Panc1 (cell line): ENCODE measurements at regions of chr9 and their contacts with region 1.

Region 1: DNA sequence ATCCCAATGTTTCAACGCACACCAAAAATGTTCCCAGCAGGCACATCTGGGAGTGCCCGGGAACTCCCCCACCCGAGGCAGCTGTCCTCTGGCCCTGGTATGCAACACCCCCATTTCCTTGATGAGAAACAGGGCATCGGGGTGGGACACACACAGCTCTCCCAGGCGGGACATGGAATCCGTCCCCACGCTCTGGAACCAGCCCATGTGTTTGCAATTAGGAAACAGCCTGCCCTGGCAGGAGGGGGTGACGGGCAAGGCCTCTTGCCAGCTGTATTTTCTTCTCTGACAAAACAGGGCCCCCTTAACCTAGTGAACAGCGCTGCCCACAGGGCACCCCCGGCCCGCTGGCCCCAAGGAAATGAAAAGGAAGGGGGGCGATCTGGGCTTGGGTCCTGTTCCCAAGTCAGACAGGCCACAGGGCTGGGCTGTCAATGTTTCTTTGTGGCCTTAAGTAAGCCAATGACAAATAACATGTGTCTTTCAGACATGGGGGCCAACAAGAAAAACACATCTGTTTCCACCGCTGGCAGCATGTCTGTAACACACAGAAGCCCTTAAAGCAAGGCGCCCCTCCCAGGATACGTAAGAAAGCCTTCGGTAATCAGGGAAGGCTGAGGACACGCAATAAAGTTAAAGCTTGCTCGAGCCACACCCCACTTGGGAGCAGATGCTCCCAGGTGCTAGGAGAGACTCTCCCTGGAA is 125.3 kb downstream of the ROR2 start:
- DNase-seq: no peak
- ATAC-seq: no peak
- H3K4me3 ChIP-seq: no peak overlapping the region
- H3K27ac ChIP-seq: no peak overlapping the region
- H3K4me1 ChIP-seq: no peaks in the 10 kb centered on the region
- H3K27me3 ChIP-seq: no peaks in the 10 kb centered on the region
- CTCF ChIP-seq: no peak

Region 2: DNA sequence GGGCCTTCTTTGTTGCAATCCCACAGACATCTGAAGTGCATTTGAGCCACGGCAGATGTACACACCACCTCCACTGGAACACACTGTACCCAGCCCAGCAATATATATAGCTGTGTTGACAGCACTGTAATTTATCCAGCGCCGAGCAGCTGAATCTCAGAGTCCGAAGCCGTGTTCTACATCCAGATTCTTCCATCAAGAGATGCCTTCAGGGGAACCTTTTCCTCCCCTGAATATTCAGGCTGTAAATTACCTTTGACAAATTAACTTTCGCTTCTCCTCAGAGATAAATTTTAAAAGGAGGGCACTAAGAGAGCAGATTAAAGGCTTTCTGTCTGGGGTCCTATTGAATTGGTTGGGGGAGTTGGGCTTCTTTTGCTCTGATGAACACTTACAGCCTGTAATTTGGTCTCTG is 48.9 kb after region 1 on chr9:
- CTCF ChIA-PET with region 1: no interaction called
- POLR2A ChIA-PET with region 1: no interaction called
- in situ Hi-C with region 1: no loop called
- intact Hi-C with region 1: no loop called
- DNase-seq: no peak
- ATAC-seq: no peak
- H3K4me3 ChIP-seq: no peak overlapping the region
- H3K27ac ChIP-seq: no peak overlapping the region
- H3K4me1 ChIP-seq: no peaks in the 10 kb centered on the region
- H3K27me3 ChIP-seq: no peaks in the 10 kb centered on the region
- CTCF ChIP-seq: no peak

Region 3: GRCh38 chr9:92064711-92065110 is 240.0 kb after region 1 on chr9:
- CTCF ChIA-PET with region 1: no interaction called
- POLR2A ChIA-PET with region 1: interaction called, 12 read pairs
- in situ Hi-C with region 1: no loop called
- intact Hi-C with region 1: no loop called
- DNase-seq: no peak
- ATAC-seq: no peak
- H3K4me3 ChIP-seq: no peak overlapping the region
- H3K27ac ChIP-seq: no peak overlapping the region
- H3K4me1 ChIP-seq: no peaks in the 10 kb centered on the region
- H3K27me3 ChIP-seq: no peaks in the 10 kb centered on the region
- CTCF ChIP-seq: no peak